Activated T-helper 2 cell treated with anti-CD3 and anti-CD28 coated beads, Interferon-gamma antibody, Interleukin-2, Interleukin-4, amounts not matched to agents 10 μg/mL and 5 μg/mL and 100 μg/mL, durations not matched to agents 14 hours and 24 hours and 36 hours (primary cell): ENCODE measurements at regions of chr11 and their contacts with region 1.

Region 1: GRCh38 chr11:128472128-128473089 is 114.9 kb downstream of the ETS1 start:
- DNase-seq: peak; percentile 62
- H3K4me3 Mint-ChIP-seq: peak overlapping the region; percentile 75
- H3K27ac Mint-ChIP-seq: peak overlapping the region; percentile 95
- H3K4me1 Mint-ChIP-seq: peaks cover 94% of the 10 kb centered on the region
- H3K27me3 Mint-ChIP-seq: no peaks in the 10 kb centered on the region

Region 2: GRCh38 chr11:128180446-128181087 is 291.8 kb before region 1 on chr11:
- intact Hi-C with region 1: loop called (anchors 5 kb)
- DNase-seq: no peak
- H3K4me3 Mint-ChIP-seq: no peak overlapping the region
- H3K27ac Mint-ChIP-seq: peak overlapping the region; percentile 44
- H3K4me1 Mint-ChIP-seq: peaks cover 61% of the 10 kb centered on the region
- H3K27me3 Mint-ChIP-seq: no peaks in the 10 kb centered on the region

Region 3: GRCh38 chr11:128279866-128280265 is 192.5 kb before region 1 on chr11:
- intact Hi-C with region 1: no loop called
- DNase-seq: no peak
- H3K4me3 Mint-ChIP-seq: no peak overlapping the region
- H3K27ac Mint-ChIP-seq: no peak overlapping the region
- H3K4me1 Mint-ChIP-seq: peaks cover 12% of the 10 kb centered on the region
- H3K27me3 Mint-ChIP-seq: peaks cover 5% of the 10 kb centered on the region

Region 4: GRCh38 chr11:128302425-128303186 is 169.8 kb before region 1 on chr11:
- intact Hi-C with region 1: loop called (anchors 1 kb)
- DNase-seq: peak; percentile 82
- H3K4me3 Mint-ChIP-seq: peak overlapping the region; percentile 90
- H3K27ac Mint-ChIP-seq: peak overlapping the region; percentile 96
- H3K4me1 Mint-ChIP-seq: peaks cover 71% of the 10 kb centered on the region
- H3K27me3 Mint-ChIP-seq: no peaks in the 10 kb centered on the region

Region 5: GRCh38 chr11:128379587-128380580 is 92.5 kb before region 1 on chr11:
- intact Hi-C with region 1: no loop called
- DNase-seq: peak; percentile 24
- H3K4me3 Mint-ChIP-seq: no peak overlapping the region
- H3K27ac Mint-ChIP-seq: peak overlapping the region; percentile 76
- H3K4me1 Mint-ChIP-seq: peaks cover 41% of the 10 kb centered on the region
- H3K27me3 Mint-ChIP-seq: no peaks in the 10 kb centered on the region

Region 6: DNA sequence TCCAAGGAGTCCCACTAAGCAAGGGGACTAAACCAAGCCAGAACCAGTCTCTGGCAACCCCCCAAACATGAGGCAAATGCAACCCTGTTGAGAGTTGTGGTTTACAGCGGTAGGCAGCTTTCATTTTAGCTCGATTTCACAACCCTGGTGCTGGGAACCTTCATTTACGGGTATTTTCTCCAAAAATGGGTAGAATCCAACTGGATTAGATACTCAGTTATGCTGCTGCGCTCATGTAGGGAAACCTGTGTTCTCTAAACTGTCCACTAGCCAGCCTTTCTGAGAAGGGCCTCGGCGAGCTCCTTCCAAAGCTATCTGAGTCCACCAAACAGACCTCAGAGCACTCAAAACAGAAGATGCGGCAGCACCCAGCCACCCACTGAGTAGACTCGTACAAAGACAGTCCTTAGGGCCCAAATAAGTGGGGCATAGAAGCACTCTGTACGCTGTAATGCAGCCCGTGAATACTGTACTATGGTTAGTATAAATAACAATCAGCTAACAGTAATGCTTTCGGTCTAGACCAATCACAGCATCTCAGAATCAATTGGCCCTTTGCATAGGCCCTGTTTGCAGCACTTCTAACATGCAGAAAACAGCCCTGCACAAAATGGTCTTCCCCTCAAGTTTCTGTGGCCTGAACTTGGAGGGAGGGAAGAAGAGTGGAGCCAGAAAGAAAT is 10.2 kb after region 1 on chr11:
- intact Hi-C with region 1: loop called (anchors 1 kb)
- DNase-seq: no peak
- H3K4me3 Mint-ChIP-seq: peak overlapping the region; percentile 75
- H3K27ac Mint-ChIP-seq: peak overlapping the region; percentile 95
- H3K4me1 Mint-ChIP-seq: peaks cover 91% of the 10 kb centered on the region
- H3K27me3 Mint-ChIP-seq: no peaks in the 10 kb centered on the region

Region 7: DNA sequence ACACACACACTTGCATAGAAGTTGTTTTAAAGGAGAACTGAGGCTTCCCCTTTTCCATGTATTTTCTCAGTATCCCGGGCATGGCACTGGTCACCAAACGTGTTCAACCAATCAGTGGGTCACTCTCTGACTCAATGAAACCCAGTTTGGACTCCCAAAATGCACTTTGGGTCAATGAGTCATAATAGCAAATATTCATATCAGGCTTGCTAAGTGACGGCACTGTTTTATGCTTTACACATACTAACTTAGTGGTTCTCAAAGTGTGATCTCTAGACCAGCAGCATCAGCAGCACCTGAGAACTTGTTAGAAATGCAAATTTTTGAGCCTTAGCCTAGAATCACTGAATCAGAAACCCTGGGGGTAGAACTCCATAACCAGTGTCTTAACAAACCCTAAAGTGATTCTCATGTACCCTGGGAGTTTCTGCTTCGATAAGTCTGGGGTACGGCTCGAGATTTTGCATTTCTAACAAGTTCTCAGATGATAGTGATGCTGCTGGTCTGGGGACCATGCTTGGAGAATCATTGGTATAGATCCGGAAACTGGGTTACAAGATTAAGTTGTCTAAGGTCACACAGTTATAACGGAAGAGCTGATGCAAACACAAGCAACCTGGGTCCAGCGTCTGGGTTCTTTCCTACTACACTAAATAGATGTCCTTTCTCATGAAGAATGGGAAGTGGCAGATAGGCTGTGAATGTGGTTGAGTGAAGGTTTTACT is 79.4 kb after region 1 on chr11:
- intact Hi-C with region 1: loop called (anchors 2 kb)
- DNase-seq: no peak
- H3K4me3 Mint-ChIP-seq: no peak overlapping the region
- H3K27ac Mint-ChIP-seq: peak overlapping the region; percentile 73
- H3K4me1 Mint-ChIP-seq: peaks cover 42% of the 10 kb centered on the region
- H3K27me3 Mint-ChIP-seq: no peaks in the 10 kb centered on the region